ENCODE measurements at regions of chr1 and their contacts with region 1.

Region 1: GRCh38 chr1:101288491-101288944 is 51.7 kb downstream of the S1PR1 start:
- DNase-seq: peak in 8 of 10 donors; percentile 32 to 77 (median 60)
- H3K4me3 ChIP-seq: peak overlapping the region in 14 of 59 donors; percentile 2 to 45 (median 24)
- H3K27ac ChIP-seq: no peak overlapping the region
- H3K27me3 ChIP-seq: no peaks in the 10 kb centered on the region
- CTCF ChIP-seq: peak; percentile 83 to 98 (median 92)

Region 2: GRCh38 chr1:100045206-100045605 is 1243.3 kb before region 1 on chr1:
- intact Hi-C with region 1: no loop called
- DNase-seq: no peak
- H3K4me3 ChIP-seq: no peak overlapping the region
- H3K27ac ChIP-seq: no peak overlapping the region
- H3K27me3 ChIP-seq: no peaks in the 10 kb centered on the region
- CTCF ChIP-seq: no peak

Region 3: GRCh38 chr1:100921109-100921706 is 367.3 kb before region 1 on chr1:
- intact Hi-C with region 1: loop called (anchors 5 kb)
- DNase-seq: no peak
- H3K4me3 ChIP-seq: no peak overlapping the region
- H3K27ac ChIP-seq: no peak overlapping the region
- H3K27me3 ChIP-seq: no peaks in the 10 kb centered on the region
- CTCF ChIP-seq: peak; percentile 63 to 90 (median 78)

Region 4: DNA sequence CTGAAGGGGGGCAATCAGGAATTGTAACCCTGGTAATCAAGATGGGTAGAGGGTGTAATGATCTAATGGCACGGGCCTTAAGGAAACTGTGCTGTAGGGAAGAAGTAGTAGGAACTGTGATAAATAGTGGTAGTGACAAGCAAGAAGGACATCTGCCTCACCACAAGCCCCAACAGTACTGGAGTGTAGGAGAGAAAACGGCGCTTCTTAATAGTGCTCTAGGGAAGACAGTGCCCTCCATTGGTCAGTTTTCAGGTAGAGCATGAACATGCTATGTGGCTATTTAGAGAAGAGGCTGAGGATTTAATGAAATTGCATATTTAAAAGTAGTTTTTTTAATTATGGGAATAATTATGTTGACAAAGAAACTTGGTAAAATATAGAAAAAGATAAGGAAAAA is 360.4 kb before region 1 on chr1:
- intact Hi-C with region 1: loop called (anchors 5 kb)
- DNase-seq: no peak
- H3K4me3 ChIP-seq: no peak overlapping the region
- H3K27ac ChIP-seq: no peak overlapping the region
- H3K27me3 ChIP-seq: no peaks in the 10 kb centered on the region
- CTCF ChIP-seq: peak in 2 of 56 donors; percentile 6 to 14

Region 5: DNA sequence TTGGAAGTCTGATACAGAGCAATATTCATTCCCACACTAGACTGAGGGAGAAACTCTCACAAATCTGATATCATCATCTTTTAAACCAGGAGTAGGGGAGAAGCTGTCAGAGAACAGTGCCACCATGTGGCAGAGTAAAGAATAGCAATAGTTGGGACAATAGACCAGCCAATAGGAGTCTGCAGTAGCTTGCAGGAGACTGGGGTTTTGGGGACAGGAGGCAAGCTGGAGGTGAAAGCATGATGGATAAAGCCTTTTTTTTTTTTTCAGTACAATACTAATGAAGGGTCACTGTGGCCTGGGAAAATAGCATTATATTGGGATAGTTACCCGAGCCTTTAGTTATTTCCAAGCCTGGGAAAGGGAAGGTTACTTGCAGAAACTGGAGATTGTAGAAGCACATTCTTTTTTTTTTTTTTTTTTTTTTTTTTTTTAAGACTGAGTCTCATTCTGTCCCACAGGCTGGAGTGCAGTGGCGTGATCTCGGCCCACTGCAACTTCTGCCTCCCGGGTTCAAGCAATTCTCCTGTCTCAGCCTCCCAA is 69.0 kb after region 1 on chr1:
- intact Hi-C with region 1: no loop called
- DNase-seq: peak in 3 of 10 donors; percentile 38 to 63 (median 58)
- H3K4me3 ChIP-seq: no peak overlapping the region
- H3K27ac ChIP-seq: no peak overlapping the region
- H3K27me3 ChIP-seq: peaks cover 0 to 6% (median 0%) of the 10 kb centered on the region in 45 donors
- CTCF ChIP-seq: peak; percentile 73 to 95 (median 86)

Region 6: DNA sequence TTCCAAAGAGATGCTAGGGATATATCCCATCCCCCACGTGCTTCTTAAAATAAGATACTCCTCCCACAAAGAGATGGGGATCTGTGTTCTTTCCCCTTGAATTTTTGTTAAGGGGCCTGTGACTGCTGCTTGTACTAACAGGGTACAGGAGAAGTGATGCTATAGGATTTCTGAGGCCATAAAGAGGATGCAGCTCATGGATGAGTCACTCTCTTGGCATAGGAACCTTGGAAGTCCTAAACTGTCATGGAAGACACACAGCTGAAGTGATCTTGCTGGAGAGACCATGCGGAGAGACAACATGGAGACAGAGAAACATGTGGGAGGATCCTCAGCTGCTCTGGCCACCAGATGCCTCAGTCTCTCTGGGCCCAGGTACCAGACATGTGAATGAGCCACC is 105.5 kb after region 1 on chr1:
- intact Hi-C with region 1: no loop called
- DNase-seq: no peak
- H3K4me3 ChIP-seq: no peak overlapping the region
- H3K27ac ChIP-seq: no peak overlapping the region
- H3K27me3 ChIP-seq: no peaks in the 10 kb centered on the region
- CTCF ChIP-seq: no peak